Heart left ventricle (tissue), 16 donors: ENCODE measurements at regions of chrX and their contacts with region 1.

Region 1: DNA sequence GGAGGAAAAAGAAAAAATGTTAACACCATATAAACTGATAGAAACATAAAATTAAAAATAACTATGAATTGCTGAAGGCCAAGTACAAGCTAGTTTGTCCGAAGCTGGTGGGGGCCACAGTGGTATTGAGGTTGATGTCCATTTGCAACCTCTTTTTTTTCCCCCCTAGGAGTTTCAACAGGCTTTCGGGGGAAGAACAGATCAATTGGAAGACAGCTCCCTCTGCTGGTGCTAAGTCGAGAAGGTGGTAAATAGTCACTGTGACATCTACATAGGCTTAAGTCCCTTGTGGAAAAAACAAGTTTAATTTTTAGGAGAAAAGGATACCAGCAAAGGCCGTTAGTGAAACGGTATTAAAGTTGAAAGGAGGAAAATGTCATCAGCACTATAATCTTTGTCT is 115.7 kb upstream of the ZXDA start:
- DNase-seq: peak in 1 of 5 donors; percentile 15
- ATAC-seq: no peak
- H3K4me3 ChIP-seq: no peak overlapping the region
- H3K27ac ChIP-seq: no peak overlapping the region
- H3K4me1 ChIP-seq: no peaks in the 10 kb centered on the region
- H3K27me3 ChIP-seq: peaks cover 0 to 26% (median 0%) of the 10 kb centered on the region in 9 donors
- CTCF ChIP-seq: peak in 11 of 12 donors; percentile 26 to 61 (median 49)
- POLR2A ChIP-seq: no peak

Region 2: GRCh38 chrX:57573754-57574153 is 452.2 kb before region 1 on chrX:
- intact Hi-C with region 1: loop called in 1 of 10 experiments (anchors 10 kb)
- DNase-seq: no peak
- ATAC-seq: no peak
- H3K4me3 ChIP-seq: no peak overlapping the region
- H3K27ac ChIP-seq: no peak overlapping the region
- H3K4me1 ChIP-seq: no peaks in the 10 kb centered on the region
- H3K27me3 ChIP-seq: peaks cover 0 to 3% (median 0%) of the 10 kb centered on the region in 9 donors
- CTCF ChIP-seq: peak in 10 of 12 donors; percentile 9 to 52 (median 33)
- POLR2A ChIP-seq: no peak

Region 3: GRCh38 chrX:57929373-57929772 is 96.6 kb before region 1 on chrX:
- intact Hi-C with region 1: loop called in 4 of 10 experiments (anchors 10 kb)
- DNase-seq: no peak
- ATAC-seq: peak in 2 of 4 donors; percentile 49 to 59
- H3K4me3 ChIP-seq: no peak overlapping the region
- H3K27ac ChIP-seq: no peak overlapping the region
- H3K4me1 ChIP-seq: no peaks in the 10 kb centered on the region
- H3K27me3 ChIP-seq: peaks cover 0 to 2% (median 0%) of the 10 kb centered on the region in 9 donors
- CTCF ChIP-seq: peak in 11 of 12 donors; percentile 28 to 63 (median 46)
- POLR2A ChIP-seq: no peak

Region 4: GRCh38 chrX:58044144-58044543 is 18.2 kb after region 1 on chrX:
- intact Hi-C with region 1: no loop called
- DNase-seq: no peak
- ATAC-seq: no peak
- H3K4me3 ChIP-seq: no peak overlapping the region
- H3K27ac ChIP-seq: no peak overlapping the region
- H3K4me1 ChIP-seq: no peaks in the 10 kb centered on the region
- H3K27me3 ChIP-seq: no peaks in the 10 kb centered on the region
- CTCF ChIP-seq: no peak
- POLR2A ChIP-seq: no peak